ENCODE measurements at regions of chr7 and their contacts with region 1.

Region 1: DNA sequence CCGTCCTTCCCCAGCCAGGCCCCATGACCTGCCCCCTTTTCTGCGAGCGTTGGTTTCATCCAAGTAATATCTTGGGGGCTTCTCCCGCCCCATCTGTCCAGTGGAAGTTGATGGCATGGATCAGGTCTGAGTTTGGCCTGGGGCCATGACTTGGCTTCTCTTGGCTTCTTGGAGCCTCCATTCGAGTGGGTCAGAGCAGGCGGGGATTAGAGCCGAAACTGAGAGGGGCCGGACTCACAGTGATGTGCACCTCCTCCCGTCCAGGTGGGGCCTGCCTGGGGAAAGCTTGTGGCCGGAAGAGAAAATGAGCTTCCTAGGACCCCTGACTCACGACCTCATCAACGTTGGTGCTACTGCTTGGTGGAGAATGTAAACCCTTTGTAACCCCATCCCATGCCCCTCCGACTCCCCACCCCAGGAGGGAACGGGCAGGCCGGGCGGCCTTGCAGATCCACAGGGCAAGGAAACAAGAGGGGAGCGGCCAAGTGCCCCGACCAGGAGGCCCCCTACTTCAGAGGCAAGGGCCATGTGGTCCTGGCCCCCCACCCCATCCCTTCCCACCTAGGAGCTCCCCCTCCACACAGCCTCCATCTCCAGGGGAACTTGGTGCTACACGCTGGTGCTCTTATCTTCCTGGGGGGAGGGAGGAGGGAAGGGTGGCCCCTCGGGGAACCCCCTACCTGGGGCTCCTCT is 15.1 kb upstream of the LIMK1 start:
- DNase-seq: no peak
- H3K4me3 ChIP-seq: no peak overlapping the region
- CTCF ChIP-seq: no peak

Region 2: DNA sequence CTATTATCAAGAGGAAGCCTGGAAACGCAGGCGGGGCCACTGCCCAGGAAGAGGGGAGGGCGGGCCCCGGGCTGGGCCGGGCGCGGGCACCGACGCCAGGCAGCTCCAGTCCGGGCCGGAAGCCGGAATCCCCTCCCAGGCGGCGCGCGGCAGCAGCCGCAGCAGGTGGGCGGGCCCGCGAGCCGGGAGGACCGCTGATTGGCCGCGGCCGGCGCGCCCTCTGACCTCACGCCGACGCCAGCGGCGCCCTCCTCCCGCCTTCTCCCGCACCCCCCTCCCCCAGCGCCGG is 511.5 kb before region 1 on chr7:
- CTCF ChIA-PET with region 1: no interaction called
- POLR2A ChIA-PET with region 1: no interaction called
- DNase-seq: peak; percentile 36
- H3K4me3 ChIP-seq: peak overlapping the region; percentile 84
- CTCF ChIP-seq: no peak

Region 3: GRCh38 chr7:73822319-73823076 is 246.0 kb before region 1 on chr7:
- CTCF ChIA-PET with region 1: no interaction called
- POLR2A ChIA-PET with region 1: no interaction called
- DNase-seq: peak; percentile 77
- H3K4me3 ChIP-seq: no peak overlapping the region
- CTCF ChIP-seq: no peak

Region 4: GRCh38 chr7:74083117-74083876 is 14.8 kb after region 1 on chr7 and contains the start of gene LIMK1:
- CTCF ChIA-PET with region 1: interaction called, 35 read pairs
- POLR2A ChIA-PET with region 1: interaction called, 4 read pairs
- DNase-seq: no peak
- H3K4me3 ChIP-seq: peak within 1 kb of the TSS; percentile 64
- CTCF ChIP-seq: no peak

Region 5: DNA sequence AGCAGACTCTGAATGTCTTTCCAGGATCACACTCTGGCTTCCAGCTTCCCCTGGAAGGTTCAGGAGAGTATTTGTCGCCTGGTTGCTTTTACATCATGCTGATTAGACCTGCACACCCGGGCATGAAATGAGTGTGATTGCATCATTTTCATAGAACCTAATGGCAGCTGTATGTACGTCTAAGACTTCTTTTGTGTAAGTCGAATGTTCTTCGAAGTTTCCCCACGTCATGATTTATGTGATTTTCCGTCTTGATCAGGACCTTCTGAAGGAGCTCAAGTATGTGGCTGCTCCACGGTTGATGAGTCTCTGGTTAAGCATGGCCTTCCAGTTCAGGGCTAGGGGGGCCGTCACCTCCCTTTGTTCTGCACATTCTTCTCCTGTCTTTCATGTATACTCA is 110.1 kb after region 1 on chr7:
- CTCF ChIA-PET with region 1: interaction called, 31 read pairs
- POLR2A ChIA-PET with region 1: no interaction called
- DNase-seq: no peak
- H3K4me3 ChIP-seq: no peak overlapping the region
- CTCF ChIP-seq: no peak

Region 6: DNA sequence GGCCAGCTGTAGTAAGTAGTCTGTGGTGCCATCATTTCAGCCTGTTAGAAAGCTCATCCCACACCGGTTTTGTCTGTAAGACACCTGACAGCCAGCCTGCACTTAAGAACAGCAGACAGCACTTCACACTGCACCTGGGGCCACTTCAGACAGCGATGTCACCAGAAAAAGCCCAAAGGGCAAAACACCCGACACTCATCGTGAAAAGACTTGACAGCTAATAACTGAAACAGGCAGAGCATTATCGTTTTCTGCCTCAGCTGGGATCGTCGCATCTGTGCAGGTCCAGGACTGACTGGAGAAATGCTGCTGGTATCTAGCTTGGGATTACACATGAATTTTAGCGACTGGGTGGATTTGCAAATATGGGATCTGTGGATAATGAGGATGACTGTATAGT is 124.5 kb after region 1 on chr7:
- CTCF ChIA-PET with region 1: interaction called, 23 read pairs
- POLR2A ChIA-PET with region 1: no interaction called
- DNase-seq: no peak
- H3K4me3 ChIP-seq: no peak overlapping the region
- CTCF ChIP-seq: no peak

Region 7: DNA sequence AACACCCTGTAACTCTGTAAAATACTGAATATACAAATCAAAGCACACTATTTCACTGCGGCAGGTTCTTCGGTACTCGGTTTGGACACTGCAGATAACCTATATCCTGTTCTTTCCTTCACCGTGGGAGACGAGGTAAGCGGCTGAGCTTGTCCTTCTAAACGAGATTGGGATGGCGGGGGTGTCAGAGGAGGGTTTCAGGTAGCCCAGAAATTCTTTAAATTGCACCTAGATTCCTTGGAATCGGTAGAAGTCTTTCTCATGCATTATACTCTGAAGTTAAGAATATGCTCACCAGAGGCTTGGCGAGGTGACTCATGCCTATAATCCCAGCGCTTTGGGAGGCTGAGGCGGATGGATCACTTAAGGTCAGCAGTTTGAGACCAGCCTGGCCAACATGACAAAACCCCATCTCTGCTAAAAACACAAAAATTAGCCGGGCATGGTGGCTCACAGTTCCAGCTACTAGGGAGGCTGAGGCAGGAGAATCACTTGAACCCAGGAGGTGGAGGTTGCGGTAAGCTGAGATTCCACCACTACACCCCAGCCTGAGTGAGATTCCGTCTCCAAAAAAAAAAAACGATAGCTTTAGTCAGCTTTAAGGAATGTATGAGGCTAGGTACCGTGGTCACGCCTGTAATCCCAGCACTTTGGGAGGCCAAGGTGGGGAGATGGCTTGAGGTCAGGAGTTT is 131.2 kb after region 1 on chr7:
- CTCF ChIA-PET with region 1: interaction called, 127 read pairs
- POLR2A ChIA-PET with region 1: no interaction called
- DNase-seq: no peak
- H3K4me3 ChIP-seq: no peak overlapping the region
- CTCF ChIP-seq: no peak

Region 8: DNA sequence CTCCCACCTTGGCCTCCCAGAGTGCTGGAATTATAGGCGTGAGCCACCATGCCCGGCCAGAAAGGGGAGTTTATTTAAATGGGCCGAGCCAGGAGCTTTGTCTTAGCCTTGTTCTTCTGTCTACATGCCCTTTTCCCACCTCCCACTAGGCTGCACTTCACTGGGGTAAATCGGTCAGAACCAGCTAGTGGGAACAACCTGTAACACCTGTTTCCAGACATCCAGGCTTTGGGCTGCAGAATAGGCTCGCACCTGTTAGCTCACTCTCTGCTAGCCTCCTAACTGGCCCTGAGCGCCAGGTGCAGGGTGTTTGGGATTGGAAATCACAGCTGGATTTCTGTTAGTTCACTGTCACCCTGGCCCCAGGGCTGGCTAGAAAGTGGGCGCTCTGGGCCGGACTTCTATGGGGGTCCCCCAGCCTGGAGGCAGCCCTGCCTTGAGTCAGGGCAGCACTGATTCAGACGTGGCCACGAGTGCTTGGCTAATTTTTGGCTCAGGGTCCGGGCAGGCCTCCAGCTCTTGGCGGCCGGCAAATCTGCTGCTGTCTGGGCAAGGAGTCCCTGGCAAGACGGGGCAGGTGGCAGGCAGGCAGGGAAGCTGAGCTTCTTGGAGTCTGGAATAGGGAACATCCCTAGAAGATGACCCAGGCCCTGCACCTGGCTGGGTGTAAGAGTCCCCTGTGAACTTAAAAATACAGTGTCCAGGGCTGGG is 433.8 kb after region 1 on chr7:
- CTCF ChIA-PET with region 1: no interaction called
- POLR2A ChIA-PET with region 1: no interaction called
- DNase-seq: no peak
- H3K4me3 ChIP-seq: no peak overlapping the region
- CTCF ChIP-seq: no peak